Activated CD4-positive, alpha-beta T cell treated with anti-CD3 and anti-CD28 coated beads for 36 hours (primary cell): ENCODE measurements at regions of chr3 and their contacts with region 1.

Region 1: GRCh38 chr3:195863121-195864006 is 45.0 kb downstream of the TNK2 start:
- DNase-seq: peak; percentile 88
- ATAC-seq: peak; percentile 88
- H3K4me3 Mint-ChIP-seq: no peak overlapping the region
- H3K27ac Mint-ChIP-seq: no peak overlapping the region
- H3K4me1 Mint-ChIP-seq: peaks cover 10% of the 10 kb centered on the region
- H3K27me3 Mint-ChIP-seq: no peaks in the 10 kb centered on the region

Region 2: GRCh38 chr3:195558602-195559001 is 304.8 kb before region 1 on chr3:
- CTCF ChIA-PET with region 1: no interaction called
- POLR2A ChIA-PET with region 1: no interaction called
- intact Hi-C with region 1: loop called (anchors 1 to 5 kb)
- DNase-seq: peak; percentile 39
- ATAC-seq: peak; percentile 65
- H3K4me3 Mint-ChIP-seq: no peak overlapping the region
- H3K27ac Mint-ChIP-seq: no peak overlapping the region
- H3K4me1 Mint-ChIP-seq: peaks cover 37% of the 10 kb centered on the region
- H3K27me3 Mint-ChIP-seq: no peaks in the 10 kb centered on the region

Region 3: DNA sequence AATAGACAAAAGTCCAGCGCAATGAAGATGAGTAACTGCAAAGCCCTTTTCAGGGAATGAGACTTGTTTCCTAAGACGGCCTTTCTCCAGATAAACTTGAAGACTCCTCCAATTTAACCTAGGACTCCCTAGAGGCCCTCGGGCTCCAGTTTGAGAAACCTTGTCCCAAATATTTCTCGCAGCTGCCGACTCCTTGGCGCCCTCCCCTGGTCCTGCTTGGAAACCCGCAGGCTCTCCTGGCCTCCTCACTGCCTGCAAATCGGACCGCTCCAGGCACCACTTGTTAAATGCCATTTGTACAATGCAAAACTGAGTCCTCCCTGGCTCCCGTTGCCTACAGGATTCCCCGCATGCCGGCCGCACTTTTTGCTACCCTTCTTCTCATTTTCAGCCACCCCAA is 88.4 kb before region 1 on chr3:
- CTCF ChIA-PET with region 1: no interaction called
- POLR2A ChIA-PET with region 1: interaction called, 10 read pairs
- intact Hi-C with region 1: no loop called
- DNase-seq: peak; percentile 54
- ATAC-seq: peak; percentile 15
- H3K4me3 Mint-ChIP-seq: no peak overlapping the region
- H3K27ac Mint-ChIP-seq: no peak overlapping the region
- H3K4me1 Mint-ChIP-seq: peaks cover 9% of the 10 kb centered on the region
- H3K27me3 Mint-ChIP-seq: no peaks in the 10 kb centered on the region

Region 4: GRCh38 chr3:195894780-195895607 is 31.6 kb after region 1 on chr3:
- CTCF ChIA-PET with region 1: interaction called, 26 read pairs
- POLR2A ChIA-PET with region 1: interaction called, 4 read pairs
- intact Hi-C with region 1: loop called (anchors 1 kb)
- DNase-seq: peak; percentile 86
- ATAC-seq: peak; percentile 79
- H3K4me3 Mint-ChIP-seq: peak overlapping the region; percentile 83
- H3K27ac Mint-ChIP-seq: peak overlapping the region; percentile 88
- H3K4me1 Mint-ChIP-seq: peaks cover 42% of the 10 kb centered on the region
- H3K27me3 Mint-ChIP-seq: no peaks in the 10 kb centered on the region

Region 5: GRCh38 chr3:195918176-195918575 is 54.8 kb after region 1 on chr3:
- CTCF ChIA-PET with region 1: interaction called, 74 read pairs
- POLR2A ChIA-PET with region 1: no interaction called
- intact Hi-C with region 1: loop called (anchors 1 kb)
- DNase-seq: no peak
- ATAC-seq: no peak
- H3K4me3 Mint-ChIP-seq: no peak overlapping the region
- H3K27ac Mint-ChIP-seq: no peak overlapping the region
- H3K4me1 Mint-ChIP-seq: peaks cover 13% of the 10 kb centered on the region
- H3K27me3 Mint-ChIP-seq: peaks cover 5% of the 10 kb centered on the region